Breast epithelium (tissue), 4 donors: ENCODE measurements at regions of chr6 and their contacts with region 1.

Region 1: GRCh38 chr6:148311966-148312669 is 30.5 kb upstream of the SASH1 start:
- DNase-seq: no peak
- H3K4me3 ChIP-seq: no peak overlapping the region
- H3K27ac ChIP-seq: no peak overlapping the region
- H3K4me1 ChIP-seq: no peaks in the 10 kb centered on the region
- H3K27me3 ChIP-seq: no peaks in the 10 kb centered on the region
- CTCF ChIP-seq: no peak
- POLR2A ChIP-seq: no peak

Region 2: GRCh38 chr6:147022041-147022440 is 1290.1 kb before region 1 on chr6:
- intact Hi-C with region 1: loop called (anchors 5 kb)
- DNase-seq: no peak
- H3K4me3 ChIP-seq: no peak overlapping the region
- H3K27ac ChIP-seq: no peak overlapping the region
- H3K4me1 ChIP-seq: no peaks in the 10 kb centered on the region
- H3K27me3 ChIP-seq: no peaks in the 10 kb centered on the region
- CTCF ChIP-seq: no peak
- POLR2A ChIP-seq: no peak

Region 3: GRCh38 chr6:148342357-148343046 is 30.4 kb after region 1 on chr6 and contains the start of gene SASH1:
- intact Hi-C with region 1: no loop called
- DNase-seq: peak; percentile 60 to 64
- H3K4me3 ChIP-seq: peak within 1 kb of the TSS; percentile 72 to 88 (median 72)
- H3K27ac ChIP-seq: peak within 1 kb of the TSS; percentile 95
- H3K4me1 ChIP-seq: no peaks in the 10 kb centered on the region
- H3K27me3 ChIP-seq: no peaks in the 10 kb centered on the region
- CTCF ChIP-seq: no peak
- POLR2A ChIP-seq: no peak
- total RNA-seq, gene SASH1: 107 to 304 (median 145) TPM